ENCODE measurements at regions of chr16 and their contacts with region 1.

Region 1: DNA sequence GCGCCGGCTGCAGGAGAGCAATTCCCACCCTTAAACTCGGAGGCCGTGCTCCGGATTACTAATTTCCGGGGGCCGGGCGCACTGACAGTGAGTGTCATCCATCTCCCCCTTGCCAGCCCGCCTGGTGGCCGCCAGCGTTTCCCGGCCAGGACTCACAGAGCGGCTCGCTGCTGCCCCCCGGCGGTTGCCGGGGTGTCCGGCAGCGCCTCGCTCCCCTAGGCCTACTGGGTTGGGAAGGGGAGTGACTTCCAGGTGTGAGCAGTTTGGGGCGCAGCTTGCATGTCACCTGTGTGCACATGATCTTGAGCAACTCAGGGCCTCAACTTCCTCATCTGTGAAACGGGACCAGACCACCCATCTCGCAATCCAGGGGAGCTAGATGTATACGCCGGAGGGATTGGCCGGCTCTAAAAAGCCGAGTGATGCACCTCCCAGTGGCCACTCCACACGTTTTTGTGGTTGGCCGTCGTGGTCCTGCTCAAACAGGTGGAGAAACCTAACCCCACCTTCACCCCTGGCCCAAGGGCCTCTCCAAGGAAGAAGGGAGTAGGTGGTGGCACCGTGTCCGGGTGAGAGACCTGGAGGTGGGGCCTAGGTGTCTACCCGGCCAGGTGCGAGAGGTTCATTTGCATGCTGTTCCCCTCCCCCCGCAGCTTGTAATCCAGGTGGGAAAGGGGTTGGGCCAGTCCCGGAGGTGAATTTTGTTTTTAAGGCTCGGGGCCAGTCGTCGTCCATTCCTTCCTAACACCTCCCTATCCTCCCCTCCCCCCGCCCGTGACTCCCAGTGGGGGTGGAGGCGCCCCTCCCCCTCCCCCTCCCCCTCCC is 2.4 kb upstream of the GSE1 start:
- DNase-seq: peak; percentile 87 to 95 (median 93)
- ATAC-seq: peak; percentile 34 to 38
- H3K4me3 ChIP-seq: peak overlapping the region; percentile 45
- H3K27ac ChIP-seq: no peak overlapping the region
- H3K4me1 ChIP-seq: peaks cover 19% of the 10 kb centered on the region
- H3K27me3 ChIP-seq: no peaks in the 10 kb centered on the region

Region 2: GRCh38 chr16:85305996-85306792 is 304.5 kb before region 1 on chr16:
- intact Hi-C with region 1: loop called in 3 of 4 experiments (anchors 10 kb)
- DNase-seq: peak; percentile 92 to 97 (median 96)
- ATAC-seq: peak; percentile 73 to 84
- H3K4me3 ChIP-seq: no peak overlapping the region
- H3K27ac ChIP-seq: no peak overlapping the region
- H3K4me1 ChIP-seq: peaks cover 5% of the 10 kb centered on the region
- H3K27me3 ChIP-seq: no peaks in the 10 kb centered on the region

Region 3: GRCh38 chr16:85316321-85316919 is 294.3 kb before region 1 on chr16:
- intact Hi-C with region 1: loop called in 1 of 4 experiments (anchors 10 kb)
- DNase-seq: peak; percentile 65 to 85 (median 77)
- ATAC-seq: peak; percentile 57 to 76
- H3K4me3 ChIP-seq: no peak overlapping the region
- H3K27ac ChIP-seq: no peak overlapping the region
- H3K4me1 ChIP-seq: peaks cover 9% of the 10 kb centered on the region
- H3K27me3 ChIP-seq: no peaks in the 10 kb centered on the region

Region 4: DNA sequence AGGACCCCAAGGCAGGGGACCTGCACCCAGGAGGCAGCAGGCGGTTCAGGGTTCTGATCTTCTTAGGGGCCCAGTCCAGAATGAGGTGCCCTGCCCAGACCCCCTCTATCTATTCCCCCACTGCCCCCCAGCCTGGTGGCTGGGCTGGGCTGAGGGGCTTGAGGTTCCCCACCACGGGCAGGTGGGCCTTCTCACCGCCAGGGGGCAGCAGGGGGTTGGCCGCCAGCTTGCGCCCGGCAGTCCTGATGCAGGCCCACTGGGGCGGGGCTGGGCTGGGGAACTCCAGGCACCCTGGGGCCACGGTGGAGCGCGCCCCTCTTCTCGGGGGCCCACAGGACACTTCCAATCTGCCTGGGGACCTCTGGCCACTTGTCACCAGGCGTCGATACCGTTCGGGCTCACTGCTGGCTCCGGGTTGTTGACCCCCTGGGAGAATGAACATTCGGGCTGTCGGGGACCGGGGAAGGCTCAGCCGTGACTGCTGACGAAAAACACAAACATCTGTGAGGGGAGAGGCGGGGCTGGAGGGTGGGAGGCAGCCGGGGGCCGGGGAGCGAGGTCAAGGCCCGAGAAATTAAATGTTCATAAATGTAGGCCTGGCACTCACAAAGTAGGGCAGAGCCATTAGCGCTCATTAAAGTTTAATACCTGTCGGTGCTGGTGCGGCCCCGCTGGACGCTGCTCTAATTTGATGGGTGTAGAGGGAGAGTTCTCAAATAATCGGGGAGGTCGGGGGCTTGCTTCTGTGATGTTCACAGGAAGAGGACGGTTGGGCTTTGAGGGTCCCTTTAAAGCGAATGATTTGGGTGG is 216.8 kb before region 1 on chr16:
- intact Hi-C with region 1: loop called in 1 of 4 experiments (anchors 10 kb)
- DNase-seq: peak; percentile 76 to 91 (median 88)
- ATAC-seq: peak; percentile 5 to 41
- H3K4me3 ChIP-seq: no peak overlapping the region
- H3K27ac ChIP-seq: no peak overlapping the region
- H3K4me1 ChIP-seq: peaks cover 12% of the 10 kb centered on the region
- H3K27me3 ChIP-seq: no peaks in the 10 kb centered on the region

Region 5: GRCh38 chr16:85420501-85421337 is 190.0 kb before region 1 on chr16:
- intact Hi-C with region 1: loop called in 3 of 4 experiments (anchors 5 to 10 kb)
- DNase-seq: peak; percentile 53 to 86 (median 84)
- ATAC-seq: peak; percentile 22 to 58
- H3K4me3 ChIP-seq: no peak overlapping the region
- H3K27ac ChIP-seq: no peak overlapping the region
- H3K4me1 ChIP-seq: no peaks in the 10 kb centered on the region
- H3K27me3 ChIP-seq: no peaks in the 10 kb centered on the region

Region 6: GRCh38 chr16:85554814-85555543 is 55.7 kb before region 1 on chr16:
- intact Hi-C with region 1: loop called in 2 of 4 experiments (anchors 5 kb)
- DNase-seq: peak; percentile 82 to 91 (median 89)
- ATAC-seq: peak; percentile 62 to 70
- H3K4me3 ChIP-seq: peak overlapping the region; percentile 89
- H3K27ac ChIP-seq: peak overlapping the region; percentile 94
- H3K4me1 ChIP-seq: peaks cover 4% of the 10 kb centered on the region
- H3K27me3 ChIP-seq: no peaks in the 10 kb centered on the region

Region 7: GRCh38 chr16:85569615-85570212 is 41.0 kb before region 1 on chr16:
- intact Hi-C with region 1: loop called in 1 of 4 experiments (anchors 5 kb)
- DNase-seq: no peak
- ATAC-seq: no peak
- H3K4me3 ChIP-seq: no peak overlapping the region
- H3K27ac ChIP-seq: no peak overlapping the region
- H3K4me1 ChIP-seq: peaks cover 17% of the 10 kb centered on the region
- H3K27me3 ChIP-seq: no peaks in the 10 kb centered on the region

Region 8: DNA sequence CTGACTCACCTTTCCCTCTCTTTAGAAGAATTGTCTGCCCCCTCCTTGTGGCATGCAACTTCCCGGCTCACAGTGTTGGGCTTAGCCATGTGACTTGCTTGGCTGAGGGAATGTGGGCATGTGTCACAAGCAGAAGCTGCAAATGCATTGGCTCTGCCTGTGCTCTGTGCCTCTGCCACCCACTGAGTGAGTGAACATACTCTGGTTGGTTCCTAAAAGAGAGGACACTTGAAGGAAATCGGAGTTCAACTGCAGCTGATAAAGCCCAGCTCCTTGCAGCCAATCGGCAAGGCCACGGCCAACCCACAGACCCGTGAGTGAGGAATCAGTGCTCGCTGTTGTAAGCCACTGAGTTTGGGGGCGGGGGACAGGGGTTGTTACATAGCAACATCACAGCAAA is 88.9 kb after region 1 on chr16:
- intact Hi-C with region 1: no loop called
- DNase-seq: peak in 1 of 3 donors; percentile 63
- ATAC-seq: peak; percentile 57 to 81
- H3K4me3 ChIP-seq: no peak overlapping the region
- H3K27ac ChIP-seq: no peak overlapping the region
- H3K4me1 ChIP-seq: no peaks in the 10 kb centered on the region
- H3K27me3 ChIP-seq: no peaks in the 10 kb centered on the region

Region 9: GRCh38 chr16:85979605-85980004 is 368.9 kb after region 1 on chr16:
- intact Hi-C with region 1: no loop called
- DNase-seq: no peak
- ATAC-seq: no peak
- H3K4me3 ChIP-seq: no peak overlapping the region
- H3K27ac ChIP-seq: no peak overlapping the region
- H3K4me1 ChIP-seq: no peaks in the 10 kb centered on the region
- H3K27me3 ChIP-seq: no peaks in the 10 kb centered on the region

Measured in right cardiac atrium (tissue), 5 donors.